ENCODE measurements at regions of chr2 and their contacts with region 1.

Region 1: GRCh38 chr2:68569604-68570003 is 73.8 kb upstream of the PROKR1 start:
- DNase-seq: peak; percentile 40
- ATAC-seq: no peak
- H3K4me3 ChIP-seq: no peak overlapping the region
- H3K27ac ChIP-seq: no peak overlapping the region
- H3K4me1 ChIP-seq: peaks cover 39% of the 10 kb centered on the region
- H3K27me3 ChIP-seq: no peaks in the 10 kb centered on the region
- CTCF ChIP-seq: no peak

Region 2: DNA sequence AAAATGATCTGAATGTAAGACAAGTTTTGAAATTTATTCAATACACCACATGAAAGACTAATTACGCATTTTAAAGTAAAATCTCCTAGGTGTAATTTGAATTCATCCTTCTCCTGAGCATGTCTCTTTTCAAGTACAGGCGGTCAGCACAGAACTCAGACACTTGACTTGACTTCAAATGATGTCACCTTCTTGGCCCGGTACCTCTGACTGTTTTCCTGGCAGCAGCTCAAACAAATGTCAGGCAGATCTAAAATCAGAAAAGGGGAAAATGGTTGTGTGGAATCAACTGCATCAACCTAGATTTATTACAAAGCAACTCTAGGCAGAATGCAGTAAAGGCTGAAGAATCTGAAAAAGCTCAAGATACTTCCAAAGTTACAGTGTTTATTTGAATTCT is 62.4 kb after region 1 on chr2:
- CTCF ChIA-PET with region 1: interaction called, 16 read pairs
- POLR2A ChIA-PET with region 1: no interaction called
- intact Hi-C with region 1: no loop called
- DNase-seq: peak; percentile 15
- ATAC-seq: no peak
- H3K4me3 ChIP-seq: no peak overlapping the region
- H3K27ac ChIP-seq: no peak overlapping the region
- H3K4me1 ChIP-seq: no peaks in the 10 kb centered on the region
- H3K27me3 ChIP-seq: peaks cover 9% of the 10 kb centered on the region; the same call in 1 of the 2 replicates
- CTCF ChIP-seq: no peak

Measured in PC-3 (cell line).